ENCODE measurements at regions of chr16 and their contacts with region 1.

Region 1: GRCh38 chr16:89410794-89411309 is 79.5 kb downstream of the ANKRD11 start:
- DNase-seq: peak; percentile 91 to 98 (median 97)
- ATAC-seq: peak; percentile 96
- H3K4me3 ChIP-seq: no peak overlapping the region
- H3K27ac ChIP-seq: peak overlapping the region; percentile 54 to 86 (median 74)
- H3K4me1 ChIP-seq: peaks cover 87% of the 10 kb centered on the region
- H3K27me3 ChIP-seq: no peaks in the 10 kb centered on the region
- CTCF ChIP-seq: peak in 6 of 7 experiments; percentile 11 to 68 (median 62)
- POLR2A ChIP-seq: peak in 2 of 3 donors; percentile 27 to 49

Region 2: DNA sequence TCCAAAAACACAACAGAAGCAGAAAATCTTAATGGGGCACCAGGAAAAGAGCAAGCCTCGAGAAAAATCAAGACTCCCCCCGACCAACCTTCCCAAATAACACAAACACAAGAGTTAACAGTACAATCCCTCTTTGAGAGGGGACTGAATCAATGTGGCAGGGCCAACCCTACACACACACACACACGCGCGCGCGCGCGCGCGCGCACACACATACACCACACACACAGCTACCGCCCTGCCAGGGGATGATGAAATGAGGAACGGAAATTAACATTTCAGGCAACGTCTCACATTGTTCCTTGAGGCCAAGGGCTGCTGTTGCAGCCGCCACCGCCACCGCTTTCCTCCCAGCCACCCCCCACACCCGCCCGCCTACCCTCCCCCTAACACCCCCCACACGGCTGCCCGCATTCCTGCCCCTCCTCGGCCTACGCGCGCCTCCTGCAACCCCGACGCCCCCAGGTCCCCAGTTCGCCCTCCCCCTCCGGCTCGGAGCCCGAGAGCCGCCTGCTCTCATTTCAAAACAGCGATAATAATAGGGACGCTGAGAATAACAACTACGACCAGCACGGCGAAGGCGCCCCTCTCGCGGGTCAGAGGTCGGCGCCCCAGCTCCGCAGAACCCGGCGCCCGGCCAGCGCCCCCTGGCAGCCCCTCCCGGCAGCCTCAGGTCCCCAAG is 78.3 kb after region 1 on chr16:
- intact Hi-C with region 1: loop called (anchors 10 kb)
- DNase-seq: peak; percentile 81 to 93 (median 88)
- ATAC-seq: peak; percentile 40
- H3K4me3 ChIP-seq: peak overlapping the region; percentile 38 to 67
- H3K27ac ChIP-seq: peak overlapping the region; percentile 91 to 99 (median 96)
- H3K4me1 ChIP-seq: peaks cover 59% of the 10 kb centered on the region
- H3K27me3 ChIP-seq: no peaks in the 10 kb centered on the region
- CTCF ChIP-seq: peak in 5 of 7 experiments; percentile 27 to 73 (median 45)
- POLR2A ChIP-seq: peak in 2 of 3 donors; percentile 63 to 75